Left cardiac atrium (tissue), 4 donors: ENCODE measurements at regions of chr13 and their contacts with region 1.

Region 1: GRCh38 chr13:30114571-30115256 is 192.6 kb downstream of the KATNAL1 start:
- DNase-seq: peak; percentile 90
- ATAC-seq: peak; percentile 86 to 90

Region 2: GRCh38 chr13:29508130-29508875 is 606.4 kb before region 1 on chr13:
- intact Hi-C with region 1: loop called (anchors 5 to 10 kb)
- DNase-seq: peak; percentile 87
- ATAC-seq: peak; percentile 84 to 89

Region 3: DNA sequence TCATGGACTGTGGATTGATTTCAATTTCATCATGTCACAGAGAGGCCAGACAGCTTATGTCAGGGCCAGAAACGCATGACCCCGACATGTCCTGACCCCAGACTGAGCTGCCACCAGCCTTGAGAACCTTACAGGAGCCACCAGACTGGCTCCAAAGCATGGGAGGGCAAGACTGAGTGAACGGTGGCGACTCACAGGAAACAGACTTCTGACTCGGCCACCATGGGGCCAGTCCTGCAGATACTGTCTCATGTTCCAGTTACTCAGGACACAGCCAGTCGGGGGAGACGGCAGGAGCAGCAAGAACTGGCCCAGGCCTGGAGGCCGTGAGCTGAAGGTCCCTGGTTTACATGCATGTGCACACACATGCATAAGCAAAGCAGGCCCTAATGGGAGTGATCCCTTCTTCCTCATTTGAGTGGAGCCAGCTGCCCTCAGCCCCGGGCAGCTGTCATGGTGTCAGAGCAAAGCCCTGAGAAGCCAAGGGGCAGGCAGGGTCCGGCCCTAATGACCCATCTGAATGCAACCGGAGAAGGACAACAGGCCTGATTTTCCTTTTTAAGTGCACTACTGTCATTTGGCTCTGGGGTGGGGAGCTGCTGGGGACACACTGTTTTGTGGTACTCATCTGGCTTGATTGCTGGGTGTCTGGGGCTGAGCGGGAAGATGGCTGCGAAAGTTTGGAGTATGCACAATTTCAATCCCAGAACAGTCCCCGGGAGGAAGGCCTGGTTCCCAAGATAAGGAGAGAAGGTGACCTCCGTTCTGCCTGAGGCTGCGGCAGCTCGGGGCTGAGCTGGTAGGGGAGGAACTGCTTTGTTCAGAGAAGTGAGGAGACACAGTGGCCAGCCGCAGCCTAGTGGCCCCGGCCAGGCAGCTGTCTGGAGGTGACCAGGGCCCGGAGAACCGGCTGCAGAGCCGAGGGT is 601.1 kb before region 1 on chr13:
- intact Hi-C with region 1: loop called (anchors 5 to 10 kb)
- DNase-seq: no peak
- ATAC-seq: peak in 1 of 2 donors; percentile 47

Region 4: DNA sequence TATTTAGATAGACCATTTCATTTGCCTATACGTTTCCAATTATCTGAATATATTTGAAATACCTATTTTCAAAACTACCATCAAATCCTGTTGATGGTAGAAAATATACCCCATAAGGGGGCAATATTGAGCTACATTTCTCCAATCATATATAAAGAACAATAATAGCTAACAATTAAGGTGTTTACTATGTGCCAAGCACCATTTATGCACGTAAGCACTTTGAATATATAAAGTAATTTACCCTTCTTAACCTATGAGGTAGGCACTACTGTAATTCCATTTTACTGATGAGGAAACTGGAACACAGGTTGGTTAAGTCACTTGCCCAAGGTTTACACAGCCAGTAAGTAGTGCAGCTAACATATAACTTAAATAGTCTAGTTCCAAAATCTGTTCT is 343.5 kb before region 1 on chr13:
- intact Hi-C with region 1: loop called (anchors 2 to 10 kb)
- DNase-seq: no peak
- ATAC-seq: no peak

Region 5: GRCh38 chr13:29849731-29850223 is 264.9 kb before region 1 on chr13:
- intact Hi-C with region 1: loop called in 1 of 2 experiments (anchors 5 kb)
- DNase-seq: peak; percentile 65
- ATAC-seq: peak; percentile 50 to 59